H1 (cell line): ENCODE measurements at regions of chr1 and their contacts with region 1.

Region 1: DNA sequence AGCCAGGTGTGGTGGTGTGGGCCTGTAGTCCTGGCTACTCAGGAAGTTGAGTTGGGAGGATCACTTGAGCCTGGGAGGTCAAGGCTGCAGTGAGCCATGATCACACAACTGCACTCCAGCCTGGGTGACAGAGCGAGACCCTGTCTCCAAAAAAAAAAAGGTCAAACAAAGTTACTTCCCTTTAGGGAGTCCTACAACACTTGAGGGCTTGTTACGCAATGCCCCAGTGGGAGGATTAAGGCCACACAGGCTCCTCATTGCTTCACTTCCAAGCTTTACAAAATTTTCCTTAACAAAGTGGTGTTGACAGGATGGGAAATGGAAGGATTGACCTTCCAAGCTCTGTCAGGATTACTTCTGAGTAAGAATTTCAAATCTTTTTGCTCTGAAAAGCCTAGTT is 6.2 kb upstream of the EXTL1 start:
- DNase-seq: no peak
- H3K4me3 ChIP-seq: no peak overlapping the region
- H3K27ac ChIP-seq: no peak overlapping the region
- H3K4me1 ChIP-seq: peaks cover 0 to 8% (median 4%) of the 10 kb centered on the region in 4 experiments; a peak in 6 of 7 replicates
- H3K27me3 ChIP-seq: no peaks in the 10 kb centered on the region
- CTCF ChIP-seq: no peak
- EP300 ChIP-seq: no peak
- POLR2A ChIP-seq: no peak
- RAD21 ChIP-seq: no peak

Region 2: DNA sequence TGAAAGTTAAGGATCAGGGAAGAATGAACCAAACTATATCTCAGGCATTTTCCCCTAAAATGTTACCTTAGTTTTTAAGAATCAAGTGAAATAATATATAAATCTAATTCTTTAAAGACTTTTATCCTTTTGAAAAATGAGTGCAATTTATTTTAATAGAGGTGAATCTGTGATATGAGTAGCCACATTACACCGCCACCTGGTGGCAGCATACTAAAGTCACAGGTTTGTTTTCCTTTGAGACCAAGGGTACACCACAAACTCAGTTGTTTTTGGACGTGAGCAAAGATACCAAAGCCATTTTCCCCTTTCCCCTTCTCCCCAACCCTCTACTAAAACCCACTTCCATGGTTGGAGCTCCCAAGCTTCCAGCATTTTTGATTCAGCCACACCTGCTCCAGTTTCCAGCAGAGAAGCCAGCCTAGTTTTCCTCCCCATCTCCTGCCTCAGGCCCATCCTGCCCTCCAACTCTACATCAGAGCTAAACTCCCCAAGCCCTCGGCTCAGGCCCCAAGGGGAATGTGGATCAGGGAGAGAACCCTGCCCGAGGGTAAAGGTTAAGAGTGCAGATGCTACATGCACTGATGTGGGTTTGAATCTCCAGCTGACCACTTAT is 494.8 kb before region 1 on chr1:
- CTCF ChIA-PET with region 1: no interaction called
- POLR2A ChIA-PET with region 1: no interaction called
- DNase-seq: peak in 1 of 2 experiments; percentile 77
- H3K4me3 ChIP-seq: no peak overlapping the region
- H3K27ac ChIP-seq: no peak overlapping the region
- H3K4me1 ChIP-seq: peaks cover 4 to 8% (median 4%) of the 10 kb centered on the region in 4 experiments; a peak in 6 of 7 replicates
- H3K27me3 ChIP-seq: no peaks in the 10 kb centered on the region; a peak in 1 of 7 replicates
- CTCF ChIP-seq: peak in 2 of 3 experiments; percentile 63 to 76; a peak in 3 of 4 replicates
- EP300 ChIP-seq: no peak
- POLR2A ChIP-seq: no peak
- RAD21 ChIP-seq: peak; percentile 51 to 64

Region 3: GRCh38 chr1:26029471-26030135 is 14.2 kb after region 1 on chr1:
- CTCF ChIA-PET with region 1: interaction called, 46 read pairs
- POLR2A ChIA-PET with region 1: interaction called, 3 read pairs
- DNase-seq: no peak
- H3K4me3 ChIP-seq: no peak overlapping the region
- H3K27ac ChIP-seq: no peak overlapping the region
- H3K4me1 ChIP-seq: peaks cover 0 to 4% (median 2%) of the 10 kb centered on the region in 4 experiments; a peak in 3 of 7 replicates
- H3K27me3 ChIP-seq: peaks cover 3 to 15% (median 13%) of the 10 kb centered on the region in 4 experiments; a peak in 6 of 7 replicates
- CTCF ChIP-seq: peak; percentile 29 to 56 (median 55)
- EP300 ChIP-seq: no peak
- POLR2A ChIP-seq: no peak
- RAD21 ChIP-seq: peak; percentile 56 to 74